HAP-1 (cell line): ENCODE measurements at regions of chr18 and their contacts with region 1.

Region 1: GRCh38 chr18:37476182-37476581 is 89.4 kb downstream of the CELF4 start:
- DNase-seq: peak; percentile 10 to 61
- H3K4me3 ChIP-seq: no peak overlapping the region
- H3K4me1 ChIP-seq: no peaks in the 10 kb centered on the region
- H3K27me3 ChIP-seq: 0 out of 2 replicates have a peak, but pooled peaks cover 2% of the 10 kb centered on the region

Region 2: GRCh38 chr18:36942264-36942663 is 533.9 kb before region 1 on chr18:
- in situ Hi-C with region 1: loop called (anchors 25 kb)
- DNase-seq: peak; percentile 22 to 55
- H3K4me3 ChIP-seq: no peak overlapping the region
- H3K4me1 ChIP-seq: peaks cover under 1% of the 10 kb centered on the region; the same call in 1 of the 2 replicates
- H3K27me3 ChIP-seq: no peaks in the 10 kb centered on the region

Region 3: DNA sequence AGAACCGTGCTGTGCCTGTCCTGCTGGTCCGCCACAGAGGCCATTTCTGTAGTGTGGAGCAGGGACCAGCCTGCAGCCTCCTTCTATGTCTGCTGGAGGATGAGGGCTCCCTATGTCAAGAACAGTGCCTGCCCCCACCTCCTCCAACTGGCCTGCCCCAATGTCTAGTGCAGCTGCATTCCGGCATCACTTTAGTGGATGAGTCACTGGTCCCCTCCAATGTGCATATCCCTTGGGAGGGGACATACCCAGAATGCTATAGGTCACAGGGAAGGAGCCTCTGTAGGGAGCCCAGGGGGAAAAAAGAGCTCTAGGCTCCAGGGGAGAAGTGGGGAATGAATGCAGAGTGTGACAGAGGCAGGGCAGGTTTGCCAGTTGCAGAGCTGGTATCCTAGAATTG is 130.1 kb before region 1 on chr18:
- in situ Hi-C with region 1: loop called (anchors 10 kb)
- DNase-seq: no peak
- H3K4me3 ChIP-seq: no peak overlapping the region
- H3K4me1 ChIP-seq: no peaks in the 10 kb centered on the region
- H3K27me3 ChIP-seq: peaks cover 9% of the 10 kb centered on the region

Region 4: DNA sequence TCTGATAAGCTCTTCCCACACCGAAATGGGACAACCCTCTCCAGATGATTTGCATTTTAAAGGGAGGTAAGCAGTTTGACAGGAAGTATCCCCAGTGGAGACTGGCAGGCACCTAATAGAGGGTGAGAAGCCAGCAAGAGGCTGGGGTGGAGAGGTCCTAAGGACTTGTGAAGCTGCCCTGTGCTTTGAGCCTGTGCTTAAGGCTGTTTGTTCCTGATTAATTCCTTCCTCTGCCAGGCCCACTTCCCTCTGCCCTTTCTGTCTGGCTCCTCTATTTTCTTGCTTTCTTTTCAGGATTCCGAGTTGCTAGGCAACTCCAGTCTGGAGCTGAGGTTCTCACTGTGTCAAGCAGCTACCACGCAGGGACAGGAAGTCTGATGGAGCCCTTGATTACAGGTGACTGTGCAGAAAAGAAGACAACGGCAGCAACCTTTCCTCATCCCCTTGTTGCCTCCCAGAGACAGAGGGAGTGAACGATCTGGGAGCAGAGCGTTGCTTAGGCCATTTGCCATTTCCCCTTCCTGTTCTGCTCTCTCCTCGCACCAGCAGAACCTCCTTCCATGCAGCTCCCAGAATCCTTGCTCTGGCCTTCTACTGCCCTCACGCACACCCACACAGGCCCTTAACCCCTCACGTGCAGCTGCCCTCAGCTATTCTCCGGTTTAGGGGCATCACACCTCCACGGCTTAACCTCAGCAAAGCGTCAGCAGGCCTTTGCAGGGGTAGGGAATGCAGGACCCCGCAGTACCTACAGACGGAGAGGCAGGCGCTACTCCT is 193.0 kb after region 1 on chr18:
- in situ Hi-C with region 1: no loop called
- DNase-seq: no peak
- H3K4me3 ChIP-seq: no peak overlapping the region
- H3K4me1 ChIP-seq: peaks cover 2% of the 10 kb centered on the region; the same call in 1 of the 2 replicates
- H3K27me3 ChIP-seq: no peaks in the 10 kb centered on the region